Lower lobe of right lung (tissue), 2 donors: ENCODE measurements at regions of chr5 and their contacts with region 1.

Region 1: GRCh38 chr5:115246361-115246991 is 16.2 kb downstream of the PGGT1B start:
- DNase-seq: no peak
- ATAC-seq: peak; percentile 63 to 66
- H3K4me3 ChIP-seq: no peak overlapping the region
- H3K27ac ChIP-seq: no peak overlapping the region
- H3K4me1 ChIP-seq: peaks cover 19% of the 10 kb centered on the region
- H3K27me3 ChIP-seq: no peaks in the 10 kb centered on the region
- CTCF ChIP-seq: peak; percentile 70

Region 2: GRCh38 chr5:115098041-115098702 is 148.3 kb before region 1 on chr5:
- intact Hi-C with region 1: loop called (anchors 5 kb)
- DNase-seq: no peak
- ATAC-seq: peak; percentile 79 to 80
- H3K4me3 ChIP-seq: no peak overlapping the region
- H3K27ac ChIP-seq: no peak overlapping the region
- H3K4me1 ChIP-seq: no peaks in the 10 kb centered on the region
- H3K27me3 ChIP-seq: no peaks in the 10 kb centered on the region
- CTCF ChIP-seq: peak; percentile 74

Region 3: DNA sequence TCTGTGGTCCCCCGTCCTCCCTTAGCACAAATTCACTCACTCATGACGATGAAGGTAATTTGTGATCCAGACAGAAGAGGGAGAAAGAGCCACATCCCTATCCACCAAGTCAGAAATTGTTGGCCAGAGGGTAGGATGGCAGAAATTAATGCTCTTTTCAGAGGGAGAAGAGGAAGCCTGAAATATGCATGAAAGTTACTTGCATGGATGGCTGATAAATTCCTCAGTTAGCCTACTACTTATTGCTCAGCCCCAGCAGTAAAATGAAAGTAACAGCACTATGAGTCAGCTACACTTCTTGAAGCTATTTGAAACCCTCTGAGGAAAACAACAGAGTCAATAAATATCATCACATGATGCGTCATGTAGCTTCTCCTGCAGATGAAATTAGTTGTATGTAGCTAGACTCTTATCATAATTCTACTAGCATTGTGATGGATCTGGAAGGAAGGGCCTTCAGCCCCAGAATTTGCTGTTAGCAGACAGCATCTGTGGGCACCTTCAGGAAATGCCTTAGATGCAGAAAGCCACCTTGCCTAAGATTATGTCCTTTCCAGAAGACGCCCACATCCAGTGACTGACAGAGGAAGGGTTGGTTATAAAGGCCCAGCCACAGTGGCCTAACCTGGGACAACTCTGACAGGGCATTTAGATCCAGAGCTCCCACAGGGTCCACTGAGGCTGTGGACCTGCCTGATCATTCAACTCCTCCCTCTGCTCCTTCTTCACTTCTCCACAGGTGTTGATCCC is 131.2 kb after region 1 on chr5:
- intact Hi-C with region 1: no loop called
- DNase-seq: no peak
- ATAC-seq: peak in 1 of 2 donors; percentile 62
- H3K4me3 ChIP-seq: no peak overlapping the region
- H3K27ac ChIP-seq: no peak overlapping the region
- H3K4me1 ChIP-seq: peaks cover 15% of the 10 kb centered on the region
- H3K27me3 ChIP-seq: no peaks in the 10 kb centered on the region
- CTCF ChIP-seq: peak; percentile 22

Region 4: GRCh38 chr5:115494570-115495289 is 248.3 kb after region 1 on chr5:
- intact Hi-C with region 1: no loop called
- DNase-seq: no peak
- ATAC-seq: no peak
- H3K4me3 ChIP-seq: no peak overlapping the region
- H3K27ac ChIP-seq: no peak overlapping the region
- H3K4me1 ChIP-seq: no peaks in the 10 kb centered on the region
- H3K27me3 ChIP-seq: no peaks in the 10 kb centered on the region
- CTCF ChIP-seq: no peak